Left cardiac atrium (tissue), 4 donors: ENCODE measurements at regions of chr10 and their contacts with region 1.

Region 1: GRCh38 chr10:22444219-22444788 is 99.0 kb downstream of the SPAG6 start:
- DNase-seq: no peak
- ATAC-seq: no peak

Region 2: GRCh38 chr10:22427890-22428571 is 16.3 kb before region 1 on chr10:
- intact Hi-C with region 1: loop called in 1 of 2 experiments (anchors 2 kb)
- DNase-seq: no peak
- ATAC-seq: peak; percentile 68 to 89

Region 3: DNA sequence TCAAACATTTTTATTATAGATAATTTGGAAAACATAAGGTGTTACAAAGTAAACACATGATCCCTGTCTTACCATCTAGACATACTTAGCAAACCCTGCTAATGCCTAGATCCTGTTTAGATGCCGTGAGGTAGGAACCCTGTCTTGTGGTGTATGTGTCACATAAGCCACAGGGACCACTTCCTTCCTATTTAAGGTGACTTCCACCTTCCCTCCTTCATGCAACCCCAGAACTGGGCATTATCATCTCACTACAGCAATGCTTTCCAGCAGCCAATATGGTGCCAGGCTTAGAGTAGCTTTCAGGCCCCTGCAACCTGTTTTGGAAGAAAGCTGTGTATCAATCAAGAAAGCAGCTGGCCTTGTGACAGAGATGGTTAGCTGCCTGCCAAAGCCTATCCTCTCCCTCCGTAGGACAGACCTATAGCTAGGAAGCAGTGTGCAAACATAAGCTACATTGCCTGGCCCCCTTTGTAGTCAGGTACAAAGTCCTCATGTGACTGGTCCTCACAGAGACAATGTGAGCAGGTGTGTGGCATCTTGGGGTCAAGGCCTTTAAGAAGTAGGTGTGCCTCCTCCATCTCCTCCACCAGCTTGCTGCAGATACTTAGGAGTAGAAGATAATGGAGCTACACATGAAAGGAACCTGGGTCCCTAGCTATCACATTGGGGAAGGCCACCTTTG is 47.8 kb after region 1 on chr10:
- intact Hi-C with region 1: no loop called
- DNase-seq: no peak
- ATAC-seq: no peak